PC-9 (cell line): ENCODE measurements at regions of chrX and their contacts with region 1.

Region 1: GRCh38 chrX:4379066-4379465 is 665.6 kb upstream of the PRKX start:
- DNase-seq: peak; percentile 64 to 90
- H3K4me3 ChIP-seq: no peak overlapping the region; the same call in 1 of the 2 replicates
- H3K27ac ChIP-seq: peak overlapping the region; percentile 88
- H3K4me1 ChIP-seq: peaks cover 30% of the 10 kb centered on the region
- H3K27me3 ChIP-seq: no peaks in the 10 kb centered on the region
- CTCF ChIP-seq: no peak

Region 2: GRCh38 chrX:4181756-4182407 is 197.2 kb before region 1 on chrX:
- CTCF ChIA-PET with region 1: no interaction called
- POLR2A ChIA-PET with region 1: no interaction called
- intact Hi-C with region 1: no loop called
- DNase-seq: peak; percentile 57 to 80
- H3K4me3 ChIP-seq: peak overlapping the region; percentile 44; the same call in 1 of the 2 replicates
- H3K27ac ChIP-seq: peak overlapping the region; percentile 93
- H3K4me1 ChIP-seq: peaks cover 24% of the 10 kb centered on the region
- H3K27me3 ChIP-seq: no peaks in the 10 kb centered on the region
- CTCF ChIP-seq: no peak

Region 3: DNA sequence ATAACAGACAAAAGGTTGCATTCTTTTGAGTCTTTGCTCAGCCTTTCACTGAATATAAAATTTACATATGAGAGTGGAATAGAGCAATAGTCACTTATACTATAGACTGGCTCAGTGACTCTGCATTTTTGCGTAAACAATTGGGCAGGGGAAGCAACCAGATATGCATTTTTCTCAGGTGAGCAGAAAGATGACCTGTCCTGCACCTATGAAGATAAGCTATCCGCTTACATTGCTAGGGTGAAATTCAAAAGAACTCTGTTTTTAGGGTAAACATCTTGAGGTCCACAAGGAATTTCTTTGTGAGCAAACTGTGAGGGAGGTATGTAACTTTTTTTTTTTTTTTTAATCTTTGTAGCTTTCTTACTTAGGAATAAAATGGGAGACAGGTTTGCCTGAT is 63.2 kb before region 1 on chrX:
- CTCF ChIA-PET with region 1: no interaction called
- POLR2A ChIA-PET with region 1: no interaction called
- intact Hi-C with region 1: loop called (anchors 1 kb)
- DNase-seq: peak; percentile 34 to 88
- H3K4me3 ChIP-seq: no peak overlapping the region
- H3K27ac ChIP-seq: peak overlapping the region; percentile 85
- H3K4me1 ChIP-seq: peaks cover 30% of the 10 kb centered on the region
- H3K27me3 ChIP-seq: no peaks in the 10 kb centered on the region
- CTCF ChIP-seq: no peak